ENCODE measurements at regions of chr10 and their contacts with region 1.

Region 1: DNA sequence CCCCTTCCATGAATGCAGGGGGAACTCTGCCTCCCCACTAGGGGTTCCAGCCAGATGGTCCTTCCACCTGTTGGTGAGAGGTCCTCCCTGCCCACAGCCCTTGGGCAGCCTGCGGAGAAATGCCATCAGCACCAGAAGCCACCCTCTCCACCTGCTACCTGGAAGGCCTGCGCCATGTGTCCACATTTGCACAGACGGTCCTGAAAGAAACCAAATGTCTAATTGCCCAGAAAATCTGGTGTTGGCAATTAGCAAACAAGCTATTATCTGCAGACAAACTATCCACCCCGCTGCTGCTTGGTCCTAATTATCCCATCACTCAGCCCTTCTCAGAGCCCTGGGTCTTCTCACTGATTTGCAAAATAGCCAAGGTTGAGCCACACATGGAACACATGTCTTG is 32.3 kb downstream of the HSPA12A start:
- DNase-seq: no peak
- ATAC-seq: no peak
- H3K4me3 ChIP-seq: no peak overlapping the region
- H3K27ac ChIP-seq: no peak overlapping the region
- H3K4me1 ChIP-seq: no peaks in the 10 kb centered on the region
- H3K27me3 ChIP-seq: peaks cover 0 to 5% of the 10 kb centered on the region in 2 experiments; a peak in 1 of 5 replicates
- CTCF ChIP-seq: no peak
- EP300 ChIP-seq: no peak
- POLR2A ChIP-seq: no peak
- RAD21 ChIP-seq: no peak

Region 2: GRCh38 chr10:116787893-116788665 is 78.0 kb after region 1 on chr10:
- CTCF ChIA-PET with region 1: no interaction called
- POLR2A ChIA-PET with region 1: no interaction called
- in situ Hi-C with region 1: no loop called
- intact Hi-C with region 1: loop called (anchors 2 kb)
- DNase-seq: peak; percentile 49 to 68 (median 64)
- ATAC-seq: peak; percentile 91
- H3K4me3 ChIP-seq: no peak overlapping the region
- H3K27ac ChIP-seq: no peak overlapping the region
- H3K4me1 ChIP-seq: no peaks in the 10 kb centered on the region
- H3K27me3 ChIP-seq: 0 out of 5 replicates have a peak, but pooled peaks cover 0 to 6% of the 10 kb centered on the region in 2 experiments
- CTCF ChIP-seq: peak; percentile 68 to 93 (median 83)
- EP300 ChIP-seq: no peak
- POLR2A ChIP-seq: no peak
- RAD21 ChIP-seq: peak; percentile 54 to 67

Measured in K562 (cell line).